ENCODE measurements at regions of chr11 and their contacts with region 1.

Region 1: DNA sequence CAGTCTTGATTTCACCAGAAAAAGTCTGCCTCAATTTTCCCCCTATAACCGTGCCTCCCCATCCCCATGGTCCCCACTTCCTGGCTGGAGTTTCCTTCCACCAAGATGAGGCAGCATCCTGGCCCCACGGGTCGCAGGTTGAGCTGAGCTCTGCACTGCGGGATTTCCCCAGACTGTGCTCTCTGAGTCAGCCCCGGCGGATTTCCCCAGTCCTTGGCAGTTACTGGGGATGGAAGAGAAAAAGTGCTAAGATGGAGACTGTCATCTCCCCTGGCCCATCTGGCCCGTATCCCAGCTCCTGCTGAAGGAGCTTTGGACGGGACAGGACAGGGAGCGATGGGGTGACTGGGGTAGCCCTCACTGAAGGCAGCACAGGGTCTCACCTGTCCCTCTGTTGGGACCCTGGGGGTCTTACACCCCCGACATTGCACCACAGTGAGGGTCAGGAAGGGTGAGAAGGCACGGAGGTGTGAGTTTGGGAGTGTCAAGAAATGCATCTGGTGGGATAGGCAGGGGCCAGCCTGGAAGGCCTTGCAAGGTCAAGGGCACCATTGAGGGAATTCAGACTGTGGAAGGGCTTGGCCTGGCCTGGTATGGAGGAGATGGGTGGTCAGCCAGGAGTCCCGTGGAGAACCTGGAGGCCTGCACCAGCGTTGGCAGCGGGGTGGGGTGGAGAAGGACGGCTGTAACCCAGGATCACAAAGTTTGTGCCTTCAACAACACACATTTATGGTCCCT is 36.5 kb downstream of the NADSYN1 start:
- DNase-seq: peak in 1 of 5 donors; percentile 20
- H3K4me3 ChIP-seq: no peak overlapping the region
- H3K27ac ChIP-seq: peak overlapping the region in 1 of 2 donors; percentile 52
- H3K4me1 ChIP-seq: peaks cover 13% of the 10 kb centered on the region
- H3K27me3 ChIP-seq: no peaks in the 10 kb centered on the region
- CTCF ChIP-seq: no peak
- EP300 ChIP-seq: no peak
- POLR2A ChIP-seq: no peak

Region 2: DNA sequence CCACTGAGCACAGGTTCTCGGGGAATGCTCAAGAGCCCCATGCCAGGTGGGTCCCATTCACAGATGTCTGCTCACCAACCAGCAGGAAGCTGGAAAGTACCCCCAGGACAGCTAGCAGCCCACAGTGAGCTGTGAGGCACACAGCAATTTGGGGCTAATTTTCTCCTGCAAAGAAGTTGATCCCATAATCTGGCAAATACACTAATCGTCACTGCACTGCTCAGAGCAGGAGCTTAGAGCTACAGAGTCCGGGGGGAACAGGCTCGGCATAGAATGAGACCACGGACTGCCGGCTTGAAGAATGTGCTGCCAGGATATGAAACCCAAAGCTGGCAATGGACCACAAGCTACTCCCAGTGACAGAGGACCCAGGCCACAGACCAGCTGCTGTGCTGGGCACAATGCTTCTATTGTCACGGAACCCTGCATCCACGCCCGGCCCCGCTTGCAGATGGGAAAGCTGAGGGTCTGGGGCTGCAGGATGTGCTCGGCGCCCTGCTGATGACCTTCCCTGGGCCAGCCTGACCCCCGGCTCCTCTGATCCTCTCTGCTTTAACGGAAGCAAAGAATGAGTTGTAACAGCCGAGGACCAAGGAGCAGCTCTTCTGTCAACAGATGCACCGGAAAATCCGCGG is 851.4 kb before region 1 on chr11:
- intact Hi-C with region 1: loop called in 1 of 4 experiments (anchors 5 kb)
- DNase-seq: no peak
- H3K4me3 ChIP-seq: no peak overlapping the region
- H3K27ac ChIP-seq: no peak overlapping the region
- H3K4me1 ChIP-seq: no peaks in the 10 kb centered on the region
- H3K27me3 ChIP-seq: no peaks in the 10 kb centered on the region
- CTCF ChIP-seq: no peak
- EP300 ChIP-seq: no peak
- POLR2A ChIP-seq: no peak

Measured in ovary (tissue), 10 donors.